GM12878 (cell line): ENCODE measurements at regions of chr7 and their contacts with region 1.

Region 1: DNA sequence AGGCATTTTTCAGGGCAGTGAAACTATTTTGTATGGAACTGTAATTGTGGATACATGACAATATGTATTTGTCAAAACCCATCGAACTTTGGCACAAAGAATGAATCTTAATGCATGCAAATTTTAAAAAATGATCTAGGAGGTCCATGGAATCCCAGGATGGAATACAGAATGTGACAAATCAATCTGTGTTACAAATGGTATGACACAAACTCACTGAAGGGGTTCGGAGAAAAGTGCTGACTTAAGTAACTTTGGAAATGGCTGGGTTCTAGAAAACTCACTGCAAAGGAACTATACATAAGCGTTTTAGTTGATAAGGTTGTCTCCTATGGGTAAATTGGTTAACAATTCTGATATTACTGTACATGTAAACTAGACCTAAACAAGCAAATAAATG is 26.0 kb downstream of the CALN1 start:
- DNase-seq: no peak
- ATAC-seq: no peak
- H3K4me3 ChIP-seq: no peak overlapping the region
- H3K27ac ChIP-seq: no peak overlapping the region
- H3K4me1 ChIP-seq: no peaks in the 10 kb centered on the region
- H3K27me3 ChIP-seq: no peaks in the 10 kb centered on the region
- CTCF ChIP-seq: no peak
- EP300 ChIP-seq: no peak
- POLR2A ChIP-seq: no peak
- RAD21 ChIP-seq: no peak

Region 2: GRCh38 chr7:72453250-72453870 is 67.2 kb after region 1 on chr7:
- CTCF ChIA-PET with region 1: no interaction called
- POLR2A ChIA-PET with region 1: interaction called, 12 read pairs
- RAD21 ChIA-PET with region 1: no interaction called
- SMC1A ChIA-PET with region 1: no interaction called
- in situ Hi-C with region 1: no loop called
- intact Hi-C with region 1: no loop called
- DNase-seq: no peak
- ATAC-seq: no peak
- H3K4me3 ChIP-seq: no peak overlapping the region
- H3K27ac ChIP-seq: no peak overlapping the region
- H3K4me1 ChIP-seq: no peaks in the 10 kb centered on the region
- H3K27me3 ChIP-seq: no peaks in the 10 kb centered on the region
- CTCF ChIP-seq: no peak
- EP300 ChIP-seq: no peak
- POLR2A ChIP-seq: no peak
- RAD21 ChIP-seq: no peak